MCF 10A (cell line): ENCODE measurements at regions of chr2 and their contacts with region 1.

Region 1: GRCh38 chr2:219968685-219969345 is 341.4 kb downstream of the SLC4A3 start:
- DNase-seq: peak; percentile 97
- H3K4me3 Mint-ChIP-seq: peak overlapping the region; percentile 35
- H3K27ac Mint-ChIP-seq: peak overlapping the region; percentile 61
- H3K4me1 Mint-ChIP-seq: peaks cover 17% of the 10 kb centered on the region
- H3K27me3 Mint-ChIP-seq: no peaks in the 10 kb centered on the region
- CTCF ChIP-seq: no peak

Region 2: DNA sequence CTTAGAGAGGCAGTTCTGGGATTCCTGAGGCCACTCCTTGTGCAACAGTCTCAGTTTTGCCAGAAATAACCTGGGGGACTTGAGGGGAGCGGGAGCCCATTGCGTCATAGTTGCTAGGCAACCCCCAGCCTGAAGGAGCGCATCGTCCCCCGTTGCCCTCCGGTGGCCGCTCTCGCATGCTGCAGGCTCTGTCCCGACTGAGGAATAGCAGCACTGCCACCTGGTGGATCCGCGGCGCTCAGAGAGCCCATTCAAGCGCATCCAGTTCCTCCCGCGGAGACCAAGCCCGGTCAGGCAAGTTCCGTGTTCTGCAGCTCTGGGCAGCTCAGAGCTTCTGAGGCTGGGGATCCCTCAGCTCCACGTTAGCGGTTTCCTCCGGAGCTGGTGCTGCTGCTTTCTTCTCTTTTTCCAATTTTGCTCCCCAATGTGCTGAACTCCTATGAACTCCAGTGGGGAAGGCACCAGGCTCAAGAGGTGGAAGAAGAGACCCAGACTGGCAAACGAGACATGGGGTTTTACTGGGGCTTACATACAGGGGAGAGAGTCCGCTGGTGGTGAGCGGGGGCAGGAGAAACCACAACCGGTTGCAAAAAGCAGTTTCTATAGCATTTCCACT is 326.2 kb before region 1 on chr2:
- CTCF ChIA-PET with region 1: no interaction called
- POLR2A ChIA-PET with region 1: no interaction called
- intact Hi-C with region 1: no loop called
- DNase-seq: peak; percentile 95
- H3K4me3 Mint-ChIP-seq: no peak overlapping the region
- H3K27ac Mint-ChIP-seq: no peak overlapping the region
- H3K4me1 Mint-ChIP-seq: peaks cover 12% of the 10 kb centered on the region
- H3K27me3 Mint-ChIP-seq: no peaks in the 10 kb centered on the region
- CTCF ChIP-seq: peak; percentile 96

Region 3: GRCh38 chr2:219798430-219798829 is 170.4 kb before region 1 on chr2:
- CTCF ChIA-PET with region 1: no interaction called
- POLR2A ChIA-PET with region 1: no interaction called
- intact Hi-C with region 1: no loop called
- DNase-seq: peak; percentile 25
- H3K4me3 Mint-ChIP-seq: no peak overlapping the region
- H3K27ac Mint-ChIP-seq: no peak overlapping the region
- H3K4me1 Mint-ChIP-seq: no peaks in the 10 kb centered on the region
- H3K27me3 Mint-ChIP-seq: no peaks in the 10 kb centered on the region
- CTCF ChIP-seq: no peak

Region 4: GRCh38 chr2:219861307-219861706 is 107.5 kb before region 1 on chr2:
- CTCF ChIA-PET with region 1: no interaction called
- POLR2A ChIA-PET with region 1: no interaction called
- intact Hi-C with region 1: no loop called
- DNase-seq: no peak
- H3K4me3 Mint-ChIP-seq: no peak overlapping the region
- H3K27ac Mint-ChIP-seq: no peak overlapping the region
- H3K4me1 Mint-ChIP-seq: no peaks in the 10 kb centered on the region
- H3K27me3 Mint-ChIP-seq: peaks cover 9% of the 10 kb centered on the region
- CTCF ChIP-seq: no peak

Region 5: GRCh38 chr2:220198920-220199319 is 230.1 kb after region 1 on chr2:
- CTCF ChIA-PET with region 1: no interaction called
- POLR2A ChIA-PET with region 1: interaction called, 3 read pairs
- intact Hi-C with region 1: loop called (anchors 10 kb)
- DNase-seq: peak; percentile 97
- H3K4me3 Mint-ChIP-seq: no peak overlapping the region
- H3K27ac Mint-ChIP-seq: peak overlapping the region; percentile 69
- H3K4me1 Mint-ChIP-seq: peaks cover 35% of the 10 kb centered on the region
- H3K27me3 Mint-ChIP-seq: no peaks in the 10 kb centered on the region
- CTCF ChIP-seq: no peak

Region 6: GRCh38 chr2:220277445-220278007 is 308.7 kb after region 1 on chr2:
- CTCF ChIA-PET with region 1: no interaction called
- POLR2A ChIA-PET with region 1: no interaction called
- intact Hi-C with region 1: loop called (anchors 2 kb)
- DNase-seq: peak; percentile 85
- H3K4me3 Mint-ChIP-seq: peak overlapping the region; percentile 35
- H3K27ac Mint-ChIP-seq: peak overlapping the region; percentile 89
- H3K4me1 Mint-ChIP-seq: peaks cover 56% of the 10 kb centered on the region
- H3K27me3 Mint-ChIP-seq: no peaks in the 10 kb centered on the region
- CTCF ChIP-seq: no peak